ENCODE measurements at regions of chr9 and their contacts with region 1.

Region 1: GRCh38 chr9:120892748-120893610 is 16.0 kb upstream of the PHF19 start:
- DNase-seq: peak; percentile 66
- H3K4me3 Mint-ChIP-seq: peak overlapping the region; percentile 71
- H3K27ac Mint-ChIP-seq: peak overlapping the region; percentile 100
- H3K4me1 Mint-ChIP-seq: peaks cover 75% of the 10 kb centered on the region
- H3K27me3 Mint-ChIP-seq: no peaks in the 10 kb centered on the region

Region 2: GRCh38 chr9:120531683-120532300 is 361.2 kb before region 1 on chr9:
- intact Hi-C with region 1: no loop called
- DNase-seq: no peak
- H3K4me3 Mint-ChIP-seq: no peak overlapping the region
- H3K27ac Mint-ChIP-seq: no peak overlapping the region
- H3K4me1 Mint-ChIP-seq: peaks cover 11% of the 10 kb centered on the region
- H3K27me3 Mint-ChIP-seq: no peaks in the 10 kb centered on the region

Region 3: GRCh38 chr9:120807607-120808379 is 85.2 kb before region 1 on chr9:
- intact Hi-C with region 1: no loop called
- DNase-seq: no peak
- H3K4me3 Mint-ChIP-seq: no peak overlapping the region
- H3K27ac Mint-ChIP-seq: no peak overlapping the region
- H3K4me1 Mint-ChIP-seq: no peaks in the 10 kb centered on the region
- H3K27me3 Mint-ChIP-seq: no peaks in the 10 kb centered on the region

Region 4: DNA sequence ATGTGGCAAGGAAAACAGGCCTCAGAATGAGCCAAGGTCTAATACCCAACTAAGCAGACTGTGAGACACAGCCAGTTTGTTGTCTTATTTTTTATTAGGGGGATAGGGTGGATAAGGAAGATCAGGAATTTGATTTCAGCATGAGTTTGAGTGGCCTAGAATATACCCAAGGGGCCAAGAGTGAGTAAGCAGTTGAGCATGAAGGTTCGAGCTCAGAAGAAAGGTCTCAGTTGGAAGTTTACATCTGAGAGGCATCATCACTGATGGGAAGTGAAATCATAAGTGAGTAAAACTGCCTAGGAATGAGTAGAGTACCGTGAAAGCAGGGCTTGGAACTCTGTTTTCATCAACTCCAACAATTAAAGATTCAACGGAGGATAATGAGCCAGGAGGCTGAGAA is 62.8 kb before region 1 on chr9:
- intact Hi-C with region 1: no loop called
- DNase-seq: no peak
- H3K4me3 Mint-ChIP-seq: no peak overlapping the region
- H3K27ac Mint-ChIP-seq: peak overlapping the region; percentile 8
- H3K4me1 Mint-ChIP-seq: peaks cover 9% of the 10 kb centered on the region
- H3K27me3 Mint-ChIP-seq: no peaks in the 10 kb centered on the region

Region 5: GRCh38 chr9:120875954-120876841 is 16.8 kb before region 1 on chr9:
- intact Hi-C with region 1: loop called (anchors 1 kb)
- DNase-seq: peak; percentile 90
- H3K4me3 Mint-ChIP-seq: peak overlapping the region; percentile 87
- H3K27ac Mint-ChIP-seq: peak overlapping the region; percentile 93
- H3K4me1 Mint-ChIP-seq: peaks cover 72% of the 10 kb centered on the region
- H3K27me3 Mint-ChIP-seq: no peaks in the 10 kb centered on the region

Measured in activated T-helper 2 cell treated with anti-CD3 and anti-CD28 coated beads, Interferon-gamma antibody, Interleukin-2, Interleukin-4, amounts not matched to agents 10 μg/mL and 5 μg/mL and 100 μg/mL, durations not matched to agents 14 hours and 24 hours and 36 hours (primary cell).